ENCODE measurements at regions of chr13 and their contacts with region 1.

Region 1: GRCh38 chr13:107650081-107650701 is 565.1 kb downstream of the LIG4 start:
- DNase-seq: peak; percentile 64
- ATAC-seq: no peak

Region 2: DNA sequence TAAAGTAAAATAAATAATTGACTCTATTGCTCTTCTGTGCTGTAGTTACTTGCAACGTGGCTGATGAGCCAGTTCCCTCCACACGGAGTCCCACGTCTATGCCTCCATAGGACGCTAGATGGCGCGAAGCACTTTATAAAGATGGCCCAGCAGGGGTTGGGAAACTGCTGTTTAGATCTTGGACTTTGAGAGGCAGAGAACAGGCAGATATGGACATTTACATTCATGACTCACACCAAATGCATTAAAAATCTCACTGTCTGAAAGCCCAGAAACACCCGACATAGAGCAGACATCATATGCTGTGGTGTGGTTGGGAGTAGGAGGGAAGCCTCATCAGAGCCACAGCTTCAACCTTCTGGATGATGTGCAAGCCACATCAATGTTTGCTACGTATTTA is 439.1 kb before region 1 on chr13:
- intact Hi-C with region 1: loop called (anchors 5 kb)
- DNase-seq: peak; percentile 67
- ATAC-seq: peak; percentile 84

Region 3: DNA sequence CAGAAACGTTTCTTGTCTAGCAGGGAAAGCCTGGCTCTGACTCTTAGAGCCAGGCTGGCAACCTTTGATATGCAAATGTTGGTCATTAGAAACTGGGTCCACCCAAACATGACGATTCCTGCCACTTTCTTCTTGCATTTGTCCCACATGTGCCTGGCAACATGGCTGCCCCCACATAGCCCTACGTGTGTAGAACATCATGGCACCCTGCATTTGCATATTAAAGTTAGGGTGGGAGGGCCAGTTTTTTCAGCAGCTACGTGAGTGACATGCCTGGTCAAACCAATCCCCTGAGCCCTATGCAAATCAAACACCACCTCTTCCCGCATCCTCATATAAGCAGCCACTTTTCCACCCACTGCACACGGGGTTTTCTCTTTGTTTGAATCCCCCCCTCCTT is 470.1 kb after region 1 on chr13:
- intact Hi-C with region 1: loop called (anchors 5 kb)
- DNase-seq: no peak
- ATAC-seq: no peak